IMR-90 (cell line): ENCODE measurements at regions of chr16 and their contacts with region 1.

Region 1: DNA sequence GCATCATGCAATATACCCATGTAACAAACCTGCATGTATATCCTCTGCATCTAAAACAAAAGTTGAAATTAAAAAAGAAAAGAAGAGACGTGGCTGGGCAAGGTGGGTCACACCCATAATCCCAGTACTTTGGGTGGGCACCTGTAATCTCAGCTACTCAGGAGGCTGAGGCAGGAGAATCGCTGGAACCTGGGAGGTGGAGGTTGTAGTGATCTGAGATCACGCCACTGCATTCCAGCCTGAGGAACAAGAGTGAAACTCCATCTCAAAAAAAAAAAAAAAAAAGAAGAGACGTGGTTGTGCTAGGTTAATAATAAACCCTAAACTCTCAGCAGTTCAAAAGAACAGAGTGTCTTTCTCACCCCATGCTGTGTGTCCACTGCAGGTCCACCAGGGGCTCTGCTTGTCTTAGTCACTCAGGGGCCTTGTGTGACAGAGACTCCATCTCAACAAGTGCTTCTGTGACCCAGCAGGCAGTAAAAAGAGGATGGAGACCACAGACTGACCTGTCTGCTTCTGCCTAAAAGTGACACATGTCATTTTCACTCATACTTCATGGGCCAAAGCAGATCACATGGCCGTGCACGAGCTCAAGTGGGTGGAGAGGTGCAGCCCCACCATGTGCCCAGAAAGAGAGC is 22.3 kb upstream of the N4BP1 start:
- DNase-seq: no peak
- ATAC-seq: no peak
- H3K4me3 ChIP-seq: no peak overlapping the region
- H3K27ac ChIP-seq: no peak overlapping the region
- H3K4me1 ChIP-seq: peaks cover 2% of the 10 kb centered on the region; the same call in 1 of the 2 replicates
- H3K27me3 ChIP-seq: peaks cover 4% of the 10 kb centered on the region; the same call in 1 of the 2 replicates
- CTCF ChIP-seq: no peak
- POLR2A ChIP-seq: no peak
- RAD21 ChIP-seq: no peak

Region 2: GRCh38 chr16:46947900-46948547 is 1684.2 kb before region 1 on chr16:
- CTCF ChIA-PET with region 1: no interaction called
- POLR2A ChIA-PET with region 1: no interaction called
- dilution Hi-C with region 1: no loop called
- in situ Hi-C with region 1: no loop called
- intact Hi-C with region 1: loop called (anchors 2 kb)
- DNase-seq: peak; percentile 49
- ATAC-seq: peak; percentile 87
- H3K4me3 ChIP-seq: no peak overlapping the region
- H3K27ac ChIP-seq: no peak overlapping the region
- H3K4me1 ChIP-seq: no peaks in the 10 kb centered on the region
- H3K27me3 ChIP-seq: no peaks in the 10 kb centered on the region
- CTCF ChIP-seq: peak; percentile 67
- POLR2A ChIP-seq: no peak
- RAD21 ChIP-seq: peak; percentile 73

Region 3: GRCh38 chr16:48818257-48818656 is 186.0 kb after region 1 on chr16:
- CTCF ChIA-PET with region 1: no interaction called
- POLR2A ChIA-PET with region 1: no interaction called
- dilution Hi-C with region 1: no loop called
- in situ Hi-C with region 1: no loop called
- intact Hi-C with region 1: no loop called
- DNase-seq: no peak
- ATAC-seq: no peak
- H3K4me3 ChIP-seq: no peak overlapping the region
- H3K27ac ChIP-seq: no peak overlapping the region
- H3K4me1 ChIP-seq: no peaks in the 10 kb centered on the region
- H3K27me3 ChIP-seq: no peaks in the 10 kb centered on the region
- CTCF ChIP-seq: no peak
- POLR2A ChIP-seq: no peak
- RAD21 ChIP-seq: no peak